Dendritic cell treated with granulocyte-macrophage colony-stimulating factor and Interleukin-4, amounts not matched to agents 40 ng/mL and 50 ng/mL, for 4 days (primary cell): ENCODE measurements at regions of chr10 and their contacts with region 1.

Region 1: DNA sequence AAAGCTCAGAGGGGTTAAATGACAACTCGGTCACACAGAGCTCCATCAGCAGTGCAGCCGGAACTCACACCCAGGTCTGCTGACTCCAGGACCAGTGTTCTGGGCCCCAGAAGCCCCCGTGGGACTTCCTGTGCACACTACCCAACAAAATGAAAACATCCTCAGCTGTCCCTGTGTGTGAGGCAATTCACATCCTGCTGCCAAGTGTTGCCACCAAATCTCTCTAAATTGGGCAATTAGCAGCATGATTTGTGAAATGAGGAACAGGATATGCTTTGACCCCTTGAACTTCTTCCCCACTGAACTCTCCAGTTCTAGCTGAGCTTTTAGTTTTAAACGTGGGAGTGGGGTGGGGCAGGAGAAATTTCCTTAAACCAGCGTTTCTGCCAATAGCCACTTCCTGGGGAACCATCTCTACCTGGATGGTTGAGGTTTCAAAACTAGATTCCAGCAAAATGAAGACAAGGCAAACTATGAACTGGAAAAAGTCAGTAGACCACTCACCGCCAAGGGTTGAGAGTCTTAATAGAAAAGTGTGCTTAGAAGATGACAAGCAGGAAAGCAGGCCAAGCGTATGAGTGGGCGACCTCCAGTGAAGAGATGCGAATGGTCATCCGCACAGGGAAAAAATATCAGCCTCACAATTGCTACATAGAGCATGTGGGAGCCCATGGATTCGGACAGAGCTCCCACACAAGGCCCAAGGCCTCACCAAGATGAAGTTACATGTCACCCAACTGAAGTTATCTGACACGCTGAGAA is 51.9 kb upstream of the CHST15 start:
- H3K4me3 Mint-ChIP-seq: peak overlapping the region; percentile 54
- H3K27ac Mint-ChIP-seq: no peak overlapping the region
- H3K4me1 Mint-ChIP-seq: peaks cover 18% of the 10 kb centered on the region
- H3K27me3 Mint-ChIP-seq: peaks cover 14% of the 10 kb centered on the region

Region 2: GRCh38 chr10:124043310-124044142 is 101.8 kb before region 1 on chr10:
- intact Hi-C with region 1: loop called (anchors 10 kb)
- H3K4me3 Mint-ChIP-seq: peak overlapping the region; percentile 49
- H3K27ac Mint-ChIP-seq: peak overlapping the region; percentile 82
- H3K4me1 Mint-ChIP-seq: peaks cover 77% of the 10 kb centered on the region
- H3K27me3 Mint-ChIP-seq: peaks cover 10% of the 10 kb centered on the region

Region 3: DNA sequence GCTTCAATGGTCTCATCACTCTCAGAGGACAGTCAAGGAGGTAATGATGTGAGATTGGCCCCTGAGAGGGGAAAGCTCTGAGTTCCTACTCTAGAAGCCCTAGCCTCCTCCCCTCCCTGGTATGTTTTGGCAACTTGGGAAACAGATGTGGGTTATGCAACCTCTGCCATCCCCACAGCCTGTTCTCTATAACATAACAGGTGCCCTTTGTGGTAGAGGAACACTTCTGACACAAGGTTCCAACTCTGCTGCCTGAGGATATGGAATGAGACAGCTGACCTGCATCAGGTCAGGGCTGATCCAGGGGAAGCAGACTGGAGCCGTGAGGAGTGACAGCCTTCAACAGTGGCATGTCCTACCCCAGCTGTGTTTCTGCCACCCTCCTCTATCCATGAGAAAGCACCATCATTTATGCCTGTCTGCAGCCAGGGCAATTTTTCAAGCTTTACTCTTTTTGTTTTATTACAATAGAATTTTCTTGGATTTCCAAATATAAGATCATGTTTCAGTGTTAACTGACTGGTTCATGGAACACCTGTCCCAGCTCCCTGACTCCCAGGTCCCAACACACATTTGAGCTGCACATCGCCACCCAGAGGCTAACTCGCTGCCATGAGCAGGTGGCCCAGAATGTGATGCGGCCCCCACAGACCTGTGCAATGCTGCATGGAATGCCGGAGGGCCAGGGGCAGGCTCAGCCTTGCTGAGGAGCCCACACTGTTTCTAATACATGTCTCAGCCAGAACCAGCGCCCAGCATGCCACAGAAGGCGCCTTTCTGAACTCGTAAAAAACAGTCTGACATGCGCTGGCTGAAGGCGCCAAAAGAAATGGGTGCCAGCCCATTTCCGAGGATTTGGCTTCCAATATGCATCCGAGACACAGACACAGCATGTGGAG is 72.9 kb after region 1 on chr10:
- intact Hi-C with region 1: loop called (anchors 10 kb)
- H3K4me3 Mint-ChIP-seq: no peak overlapping the region
- H3K27ac Mint-ChIP-seq: no peak overlapping the region
- H3K4me1 Mint-ChIP-seq: peaks cover 27% of the 10 kb centered on the region
- H3K27me3 Mint-ChIP-seq: peaks cover 50% of the 10 kb centered on the region

Region 4: DNA sequence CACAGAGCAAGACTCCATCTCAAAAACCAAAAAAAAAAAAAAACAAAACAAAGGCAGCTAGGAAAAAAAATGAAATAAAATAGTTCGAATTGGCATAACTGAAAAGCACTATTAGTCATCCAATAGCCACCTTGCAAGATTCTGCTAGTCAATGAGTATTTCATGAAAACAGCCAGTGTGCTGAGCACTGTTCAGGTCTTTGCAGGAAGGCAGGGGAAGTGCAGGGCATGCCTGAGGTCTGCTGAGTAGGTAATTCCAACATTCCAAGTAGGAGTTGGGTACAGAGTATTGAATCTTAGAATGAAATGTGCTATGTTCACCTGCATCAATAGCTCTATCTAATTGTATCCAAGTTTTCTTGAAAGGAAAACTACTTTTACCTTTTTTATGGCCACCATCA is 679.2 kb after region 1 on chr10:
- intact Hi-C with region 1: no loop called
- H3K4me3 Mint-ChIP-seq: no peak overlapping the region
- H3K27ac Mint-ChIP-seq: no peak overlapping the region
- H3K4me1 Mint-ChIP-seq: no peaks in the 10 kb centered on the region
- H3K27me3 Mint-ChIP-seq: no peaks in the 10 kb centered on the region